Heart left ventricle (tissue), 16 donors: ENCODE measurements at regions of chr15 and their contacts with region 1.

Region 1: DNA sequence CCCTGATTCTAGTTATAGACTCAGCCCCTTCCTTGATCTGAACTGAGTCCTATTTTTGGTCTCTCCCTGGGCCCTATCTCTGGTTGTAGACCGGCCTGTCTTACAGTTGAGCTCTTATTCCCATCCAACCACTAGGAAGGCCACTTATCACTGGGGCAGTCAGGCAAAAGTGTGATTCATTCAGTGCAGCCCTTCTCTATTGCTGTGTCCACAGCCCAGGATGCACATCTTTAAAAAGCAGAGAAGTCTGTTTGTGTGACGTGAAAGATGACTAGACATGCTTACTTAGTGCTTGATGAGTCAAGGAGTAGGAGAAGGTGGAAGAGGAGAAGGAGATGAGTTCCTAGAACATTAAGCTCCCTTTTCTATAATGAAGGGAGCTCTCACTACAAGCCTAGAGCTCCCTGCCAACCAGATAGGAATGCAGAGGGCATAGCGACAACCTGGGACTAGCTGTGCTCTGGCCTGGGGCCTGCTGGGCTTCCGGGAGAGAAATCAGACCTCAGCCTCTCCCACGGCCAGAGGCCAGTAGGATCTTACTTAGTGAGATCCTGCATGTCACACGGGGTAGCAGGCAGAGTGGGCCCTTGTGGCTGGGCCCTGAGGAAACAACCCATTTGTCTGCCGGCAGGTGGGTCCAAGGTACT is 25.7 kb downstream of the INSYN1 start:
- DNase-seq: peak in 3 of 5 donors; percentile 31 to 68 (median 54)
- ATAC-seq: peak; percentile 84 to 85 (median 84)
- H3K4me3 ChIP-seq: no peak overlapping the region
- H3K27ac ChIP-seq: peak overlapping the region in 10 of 12 donors; percentile 41 to 76 (median 60)
- H3K4me1 ChIP-seq: peaks cover 0 to 27% (median 0%) of the 10 kb centered on the region in 12 donors
- H3K27me3 ChIP-seq: no peaks in the 10 kb centered on the region
- CTCF ChIP-seq: no peak
- POLR2A ChIP-seq: no peak

Region 2: DNA sequence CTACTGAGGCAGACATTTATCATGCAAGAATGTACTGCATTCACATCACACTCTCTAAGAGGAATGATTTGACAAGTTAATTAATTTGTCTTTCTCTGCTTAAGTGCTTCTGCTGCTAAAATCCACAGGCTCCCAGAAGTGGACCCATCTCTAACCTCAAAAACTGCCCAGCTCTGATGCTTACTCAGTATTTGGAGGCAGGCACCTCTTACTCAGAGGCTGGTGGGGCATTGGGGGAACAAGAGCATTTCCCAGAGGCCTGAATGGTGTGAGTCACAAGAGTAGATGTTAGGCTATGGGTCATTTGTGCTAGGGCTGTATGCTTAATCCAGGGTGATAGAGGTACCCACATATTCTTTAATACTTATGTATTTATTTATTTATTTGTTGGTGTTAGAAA is 324.3 kb before region 1 on chr15:
- intact Hi-C with region 1: no loop called
- DNase-seq: no peak
- ATAC-seq: no peak
- H3K4me3 ChIP-seq: no peak overlapping the region
- H3K27ac ChIP-seq: no peak overlapping the region
- H3K4me1 ChIP-seq: peaks cover 0 to under 1% (median 0%) of the 10 kb centered on the region in 12 donors
- H3K27me3 ChIP-seq: peaks cover 0 to 10% (median 0%) of the 10 kb centered on the region in 9 donors
- CTCF ChIP-seq: no peak
- POLR2A ChIP-seq: no peak

Region 3: GRCh38 chr15:73794443-73795133 is 67.1 kb after region 1 on chr15:
- intact Hi-C with region 1: loop called in 1 of 10 experiments (anchors 5 kb)
- DNase-seq: no peak
- ATAC-seq: no peak
- H3K4me3 ChIP-seq: no peak overlapping the region
- H3K27ac ChIP-seq: no peak overlapping the region
- H3K4me1 ChIP-seq: peaks cover 0 to 23% (median 2%) of the 10 kb centered on the region in 12 donors
- H3K27me3 ChIP-seq: no peaks in the 10 kb centered on the region
- CTCF ChIP-seq: no peak
- POLR2A ChIP-seq: no peak

Region 4: GRCh38 chr15:73866881-73867410 is 139.5 kb after region 1 on chr15:
- intact Hi-C with region 1: loop called in 1 of 10 experiments (anchors 10 kb)
- DNase-seq: no peak
- ATAC-seq: peak in 1 of 4 donors; percentile 14
- H3K4me3 ChIP-seq: no peak overlapping the region
- H3K27ac ChIP-seq: peak overlapping the region in 3 of 12 donors; percentile 2 to 50 (median 31)
- H3K4me1 ChIP-seq: peaks cover 0 to 33% (median 10%) of the 10 kb centered on the region in 12 donors
- H3K27me3 ChIP-seq: peaks cover 0 to 7% (median 0%) of the 10 kb centered on the region in 9 donors
- CTCF ChIP-seq: peak in 3 of 12 donors; percentile 9 to 16 (median 14)
- POLR2A ChIP-seq: no peak

Region 5: DNA sequence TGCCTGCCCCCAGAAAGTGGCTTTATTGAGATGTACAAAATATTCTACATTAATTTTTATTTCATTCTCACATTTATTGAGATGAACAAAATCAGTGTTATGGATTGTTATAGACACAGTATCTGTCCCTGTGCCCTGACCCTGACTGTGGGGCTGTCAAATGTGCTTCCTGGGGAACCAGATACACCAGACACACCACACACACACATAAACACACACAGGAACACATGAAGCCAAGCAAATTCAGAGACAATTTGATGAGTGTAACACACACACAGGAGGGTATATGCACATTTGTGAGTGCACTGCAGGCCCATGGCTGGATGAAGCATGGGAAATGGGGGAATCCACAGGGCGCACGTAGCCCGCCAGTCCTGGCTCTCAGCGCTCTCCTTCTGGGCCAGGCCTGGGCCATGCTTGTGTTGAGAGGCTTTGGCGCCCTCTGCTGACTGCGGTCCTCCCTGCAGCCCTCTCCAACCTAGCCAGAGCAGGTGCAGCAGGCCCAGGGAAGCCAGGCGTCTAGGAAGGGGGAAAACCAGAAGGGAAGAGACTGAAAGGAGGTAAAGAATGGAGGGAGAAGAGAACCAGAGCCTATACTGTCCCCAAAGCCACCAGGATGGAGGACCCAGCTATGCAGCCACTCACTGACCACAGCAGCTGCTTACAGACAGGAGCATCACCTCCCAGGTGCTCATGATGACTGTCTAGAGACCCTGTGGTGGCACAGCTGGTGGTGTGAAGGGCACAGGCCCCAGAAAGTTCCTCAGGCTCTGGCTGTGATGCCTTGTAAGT is 180.8 kb after region 1 on chr15:
- intact Hi-C with region 1: loop called in 1 of 10 experiments (anchors 10 kb)
- DNase-seq: peak; percentile 76 to 89 (median 87)
- ATAC-seq: peak; percentile 91 to 97 (median 96)
- H3K4me3 ChIP-seq: no peak overlapping the region
- H3K27ac ChIP-seq: no peak overlapping the region
- H3K4me1 ChIP-seq: peaks cover 0 to 17% (median 5%) of the 10 kb centered on the region in 12 donors
- H3K27me3 ChIP-seq: no peaks in the 10 kb centered on the region
- CTCF ChIP-seq: peak; percentile 82 to 95 (median 91)
- POLR2A ChIP-seq: no peak